Endothelial cell of umbilical vein (primary cell): ENCODE measurements at regions of chr15 and their contacts with region 1.

Region 1: DNA sequence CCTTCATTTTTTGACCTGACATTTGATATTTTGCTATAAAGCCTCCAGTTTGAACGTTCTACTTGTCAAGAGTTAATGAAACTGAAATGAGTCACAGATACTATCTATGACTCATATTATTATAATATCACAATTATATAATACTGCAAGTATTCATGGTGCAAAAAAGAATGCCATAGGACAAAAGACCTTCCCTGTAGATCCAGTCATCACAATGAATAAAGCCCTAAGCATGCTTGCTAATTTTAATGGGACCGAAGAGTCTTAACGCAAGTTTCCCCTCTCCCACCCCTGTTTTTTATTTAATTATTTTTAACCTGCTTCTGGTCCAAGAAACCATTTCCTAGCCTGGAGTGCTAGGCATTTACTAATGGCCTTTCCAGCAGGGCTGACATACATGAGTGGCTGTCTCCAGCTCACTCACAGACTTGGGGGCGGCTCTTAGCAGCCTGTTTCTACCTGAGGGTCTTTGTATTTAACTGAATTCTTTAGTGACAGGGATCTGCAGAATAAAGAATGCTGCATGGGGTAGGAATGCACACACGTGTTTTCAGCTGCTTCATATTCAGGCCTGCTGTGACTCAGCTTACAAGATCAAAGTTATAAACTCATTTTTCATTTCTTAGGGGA is 61.2 kb downstream of the THBS1 start:
- DNase-seq: peak; percentile 82
- H3K4me3 ChIP-seq: no peak overlapping the region
- H3K27ac ChIP-seq: peak overlapping the region; percentile 81
- H3K4me1 ChIP-seq: peaks cover 20% of the 10 kb centered on the region
- H3K27me3 ChIP-seq: no peaks in the 10 kb centered on the region
- CTCF ChIP-seq: no peak
- POLR2A ChIP-seq: no peak

Region 2: GRCh38 chr15:39631357-39631756 is 10.8 kb before region 1 on chr15:
- CTCF ChIA-PET with region 1: interaction called, 11 read pairs
- POLR2A ChIA-PET with region 1: no interaction called
- dilution Hi-C with region 1: no loop called
- intact Hi-C with region 1: loop called (anchors 2 kb)
- DNase-seq: no peak
- H3K4me3 ChIP-seq: no peak overlapping the region
- H3K27ac ChIP-seq: no peak overlapping the region
- H3K4me1 ChIP-seq: peaks cover 23% of the 10 kb centered on the region
- H3K27me3 ChIP-seq: no peaks in the 10 kb centered on the region
- CTCF ChIP-seq: no peak
- POLR2A ChIP-seq: no peak

Region 3: GRCh38 chr15:39657714-39658113 is 15.6 kb after region 1 on chr15:
- CTCF ChIA-PET with region 1: interaction called, 4 read pairs
- POLR2A ChIA-PET with region 1: interaction called, 3 read pairs
- dilution Hi-C with region 1: no loop called
- intact Hi-C with region 1: loop called (anchors 2 kb)
- DNase-seq: peak; percentile 53
- H3K4me3 ChIP-seq: no peak overlapping the region
- H3K27ac ChIP-seq: peak overlapping the region; percentile 45
- H3K4me1 ChIP-seq: peaks cover 14% of the 10 kb centered on the region
- H3K27me3 ChIP-seq: no peaks in the 10 kb centered on the region
- CTCF ChIP-seq: no peak
- POLR2A ChIP-seq: no peak